Mammary epithelial cell (primary cell): ENCODE measurements at regions of chr3 and their contacts with region 1.

Region 1: GRCh38 chr3:102673271-102674115 is 238.7 kb downstream of the ZPLD1 start:
- DNase-seq: peak; percentile 25
- H3K4me3 ChIP-seq: no peak overlapping the region
- H3K27ac ChIP-seq: no peak overlapping the region
- H3K4me1 ChIP-seq: no peaks in the 10 kb centered on the region
- H3K27me3 ChIP-seq: peaks cover 5% of the 10 kb centered on the region
- CTCF ChIP-seq: peak; percentile 84 to 88

Region 2: GRCh38 chr3:102741108-102741507 is 67.6 kb after region 1 on chr3:
- CTCF ChIA-PET with region 1: interaction called, 13 read pairs
- dilution Hi-C with region 1: no loop called
- in situ Hi-C with region 1: no loop called
- intact Hi-C with region 1: loop called (anchors 1 kb)
- DNase-seq: peak; percentile 0
- H3K4me3 ChIP-seq: no peak overlapping the region
- H3K27ac ChIP-seq: no peak overlapping the region
- H3K4me1 ChIP-seq: no peaks in the 10 kb centered on the region
- H3K27me3 ChIP-seq: no peaks in the 10 kb centered on the region
- CTCF ChIP-seq: peak; percentile 18 to 53

Region 3: GRCh38 chr3:103127737-103128136 is 454.2 kb after region 1 on chr3:
- CTCF ChIA-PET with region 1: no interaction called
- dilution Hi-C with region 1: no loop called
- in situ Hi-C with region 1: no loop called
- intact Hi-C with region 1: loop called (anchors 10 kb)
- DNase-seq: peak; percentile 0
- H3K4me3 ChIP-seq: no peak overlapping the region
- H3K27ac ChIP-seq: no peak overlapping the region
- H3K4me1 ChIP-seq: no peaks in the 10 kb centered on the region
- H3K27me3 ChIP-seq: no peaks in the 10 kb centered on the region
- CTCF ChIP-seq: no peak